ENCODE measurements at regions of chr10 and their contacts with region 1.

Region 1: GRCh38 chr10:86376852-86377796 is 10.5 kb upstream of the GRID1 start:
- DNase-seq: peak; percentile 72
- H3K4me3 Mint-ChIP-seq: no peak overlapping the region
- H3K27ac Mint-ChIP-seq: no peak overlapping the region
- H3K4me1 Mint-ChIP-seq: no peaks in the 10 kb centered on the region
- H3K27me3 Mint-ChIP-seq: peaks cover 56% of the 10 kb centered on the region

Region 2: GRCh38 chr10:84925495-84925894 is 1451.6 kb before region 1 on chr10:
- intact Hi-C with region 1: loop called (anchors 5 kb)
- DNase-seq: no peak
- H3K4me3 Mint-ChIP-seq: no peak overlapping the region
- H3K27ac Mint-ChIP-seq: no peak overlapping the region
- H3K4me1 Mint-ChIP-seq: no peaks in the 10 kb centered on the region
- H3K27me3 Mint-ChIP-seq: no peaks in the 10 kb centered on the region

Region 3: GRCh38 chr10:85548034-85548433 is 829.1 kb before region 1 on chr10:
- intact Hi-C with region 1: loop called (anchors 5 kb)
- DNase-seq: no peak
- H3K4me3 Mint-ChIP-seq: no peak overlapping the region
- H3K27ac Mint-ChIP-seq: no peak overlapping the region
- H3K4me1 Mint-ChIP-seq: no peaks in the 10 kb centered on the region
- H3K27me3 Mint-ChIP-seq: peaks cover 3% of the 10 kb centered on the region

Region 4: GRCh38 chr10:85995791-85996190 is 381.3 kb before region 1 on chr10:
- intact Hi-C with region 1: loop called (anchors 5 kb)
- DNase-seq: no peak
- H3K4me3 Mint-ChIP-seq: no peak overlapping the region
- H3K27ac Mint-ChIP-seq: no peak overlapping the region
- H3K4me1 Mint-ChIP-seq: no peaks in the 10 kb centered on the region
- H3K27me3 Mint-ChIP-seq: peaks cover 22% of the 10 kb centered on the region

Region 5: DNA sequence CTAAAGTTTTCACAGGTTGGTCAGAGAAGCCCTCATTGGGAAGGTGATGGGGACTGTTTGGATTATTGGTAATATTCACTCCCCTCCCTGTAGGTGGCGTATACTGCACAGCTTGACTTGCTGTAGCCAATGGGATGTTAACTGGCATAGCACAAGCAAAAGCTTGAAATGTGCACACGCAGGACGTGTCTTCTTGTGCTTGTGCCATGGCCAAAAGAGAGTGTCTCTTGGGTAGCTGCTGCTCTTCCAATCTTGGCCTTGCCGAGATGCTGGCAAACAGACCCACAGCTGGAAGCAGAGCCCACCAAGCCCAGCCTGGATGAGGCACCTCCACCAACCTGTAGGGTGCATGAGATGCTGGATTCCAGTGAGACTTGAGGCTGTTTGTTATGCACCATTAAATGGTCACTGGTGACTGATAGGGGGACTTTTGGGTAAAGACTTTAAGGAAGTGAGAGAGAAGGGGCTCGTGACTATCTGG is 276.5 kb before region 1 on chr10:
- intact Hi-C with region 1: loop called (anchors 1 kb)
- DNase-seq: no peak
- H3K4me3 Mint-ChIP-seq: no peak overlapping the region
- H3K27ac Mint-ChIP-seq: no peak overlapping the region
- H3K4me1 Mint-ChIP-seq: no peaks in the 10 kb centered on the region
- H3K27me3 Mint-ChIP-seq: peaks cover 6% of the 10 kb centered on the region

Region 6: GRCh38 chr10:86178401-86179152 is 198.5 kb before region 1 on chr10:
- intact Hi-C with region 1: no loop called
- DNase-seq: no peak
- H3K4me3 Mint-ChIP-seq: no peak overlapping the region
- H3K27ac Mint-ChIP-seq: no peak overlapping the region
- H3K4me1 Mint-ChIP-seq: no peaks in the 10 kb centered on the region
- H3K27me3 Mint-ChIP-seq: no peaks in the 10 kb centered on the region

Region 7: DNA sequence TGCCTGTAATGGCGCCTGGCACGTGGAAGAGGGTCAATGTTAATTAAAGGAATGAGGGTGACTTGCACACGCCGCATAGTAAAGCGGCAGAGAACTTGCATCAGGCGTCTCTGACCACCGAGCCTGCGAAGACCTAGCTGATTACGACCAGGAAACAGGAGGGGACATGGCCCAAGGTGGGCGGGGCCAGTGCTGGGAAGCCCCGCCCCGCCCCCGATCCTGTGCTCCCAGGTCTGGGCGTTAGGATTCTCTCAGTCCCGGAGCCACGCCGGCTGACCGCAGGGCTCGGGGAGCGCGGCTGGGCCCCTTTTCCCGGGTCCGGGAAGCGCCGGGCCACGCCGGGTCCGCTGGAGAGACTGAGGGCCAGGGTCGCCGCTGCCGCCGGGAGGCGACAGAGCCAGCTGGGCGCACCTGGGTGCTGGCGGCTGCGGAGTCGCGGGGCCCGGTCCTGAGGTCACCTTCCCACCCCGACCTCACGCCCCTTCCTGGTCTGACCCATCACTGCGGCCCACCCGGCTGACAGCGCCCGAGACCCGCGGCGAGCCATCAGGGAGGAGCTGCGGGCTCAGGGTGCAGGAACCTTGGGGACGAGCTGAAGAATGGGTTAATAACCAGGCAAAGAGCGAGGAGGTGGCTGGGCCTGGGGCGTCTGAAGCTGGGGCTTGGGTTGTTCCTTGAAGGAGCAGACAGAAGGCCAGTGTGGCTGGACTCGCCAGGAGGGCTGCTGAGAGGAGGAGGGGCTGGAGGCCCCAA is 12.5 kb after region 1 on chr10:
- intact Hi-C with region 1: no loop called
- DNase-seq: no peak
- H3K4me3 Mint-ChIP-seq: peak overlapping the region; percentile 69
- H3K27ac Mint-ChIP-seq: no peak overlapping the region
- H3K4me1 Mint-ChIP-seq: peaks cover 11% of the 10 kb centered on the region
- H3K27me3 Mint-ChIP-seq: peaks cover 55% of the 10 kb centered on the region